ENCODE measurements at regions of chr10 and their contacts with region 1.

Region 1: DNA sequence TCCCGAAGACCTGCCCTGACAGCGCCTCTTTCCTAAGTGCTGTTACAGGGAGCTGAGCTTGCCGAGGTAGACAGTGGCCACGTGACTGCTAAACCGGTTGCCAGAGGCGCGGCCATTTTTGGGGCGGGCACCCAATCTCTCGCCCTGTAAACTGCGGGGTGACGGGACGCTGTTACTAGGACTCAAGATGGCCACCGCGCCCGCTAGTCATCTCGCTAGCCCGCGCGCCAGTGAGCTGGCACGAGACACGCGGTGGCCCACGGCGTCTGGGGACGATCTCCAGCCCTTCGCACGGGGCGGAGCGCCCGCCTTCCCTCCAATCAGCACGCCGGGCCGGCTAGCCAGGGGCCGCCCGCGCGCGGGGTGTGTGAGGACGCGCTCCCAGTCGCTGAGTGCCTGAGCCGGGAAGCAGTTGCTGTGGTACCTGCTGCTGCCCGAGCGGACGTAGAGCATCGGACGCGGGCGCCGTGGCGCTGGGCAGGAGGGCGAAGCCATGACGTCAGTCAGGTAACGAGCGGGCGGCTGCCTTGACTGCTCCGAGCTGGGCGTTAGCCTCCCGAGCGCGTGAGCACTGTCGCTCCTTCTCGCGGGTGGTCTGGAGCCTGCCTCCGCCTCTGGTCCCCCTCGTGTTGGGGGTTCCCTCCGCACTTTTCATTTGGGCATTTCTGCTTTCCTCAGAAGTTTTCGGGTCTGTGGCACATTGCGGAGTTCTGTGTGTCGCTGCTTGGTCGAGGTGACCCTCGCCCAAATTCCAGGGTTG is 25.5 kb downstream of the ADK start:
- DNase-seq: peak; percentile 96 to 97 (median 96)
- H3K4me3 ChIP-seq: peak overlapping the region; percentile 97
- H3K4me3 Mint-ChIP-seq: peak overlapping the region; percentile 91 to 94 (median 93)
- H3K27ac ChIP-seq: peak overlapping the region; percentile 94
- H3K27ac Mint-ChIP-seq: peak overlapping the region; percentile 93 to 98 (median 98)
- H3K4me1 ChIP-seq: peaks cover 33% of the 10 kb centered on the region
- H3K4me1 Mint-ChIP-seq: peaks cover 33 to 50% (median 48%) of the 10 kb centered on the region in 3 donors
- H3K27me3 ChIP-seq: no peaks in the 10 kb centered on the region
- H3K27me3 Mint-ChIP-seq: no peaks in the 10 kb centered on the region

Region 2: DNA sequence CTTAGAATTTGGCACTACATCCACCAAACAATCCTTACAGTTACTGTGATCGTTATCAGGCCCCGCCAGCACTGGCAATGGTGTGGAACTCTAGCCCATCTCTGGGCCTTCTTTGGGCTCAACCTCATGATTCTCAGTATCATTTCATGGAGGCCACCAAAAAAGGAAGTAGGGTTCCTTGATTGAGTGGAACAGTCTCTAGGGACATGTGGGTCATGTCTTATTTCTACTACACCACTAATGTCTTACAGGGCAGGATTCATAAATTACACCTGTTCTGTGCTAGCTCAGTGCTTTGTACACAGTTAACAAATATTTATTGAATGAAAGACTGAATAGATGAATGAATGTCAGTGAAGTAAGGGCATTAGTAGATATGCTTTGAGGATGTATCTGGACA is 79.8 kb before region 1 on chr10:
- CTCF ChIA-PET with region 1: no interaction called
- POLR2A ChIA-PET with region 1: no interaction called
- DNase-seq: no peak
- H3K4me3 ChIP-seq: no peak overlapping the region
- H3K4me3 Mint-ChIP-seq: no peak overlapping the region
- H3K27ac ChIP-seq: no peak overlapping the region
- H3K27ac Mint-ChIP-seq: peak overlapping the region in 3 of 8 donors; percentile 49 to 62 (median 54)
- H3K4me1 ChIP-seq: no peaks in the 10 kb centered on the region
- H3K4me1 Mint-ChIP-seq: no peaks in the 10 kb centered on the region
- H3K27me3 ChIP-seq: no peaks in the 10 kb centered on the region
- H3K27me3 Mint-ChIP-seq: no peaks in the 10 kb centered on the region

Region 3: DNA sequence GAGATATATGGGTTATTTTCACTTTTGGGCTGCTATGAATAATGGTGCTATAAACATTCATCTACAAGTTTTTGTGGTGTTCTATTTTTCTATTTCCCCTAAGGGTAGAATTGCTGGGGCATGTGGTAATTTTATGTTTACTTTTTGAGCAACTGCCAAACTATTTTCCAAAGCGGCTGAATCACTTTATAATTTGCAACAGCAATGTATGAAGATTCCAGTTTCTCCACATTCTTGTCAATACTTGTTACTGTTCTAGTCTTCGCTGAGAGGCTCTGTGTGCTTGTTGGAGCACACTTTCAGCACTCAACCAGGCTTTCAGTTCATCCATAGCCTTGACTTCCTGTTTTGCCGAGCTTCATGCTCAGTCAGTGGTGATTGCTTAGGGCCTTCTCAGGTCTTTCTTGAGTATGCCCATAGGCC is 13.4 kb after region 1 on chr10:
- CTCF ChIA-PET with region 1: interaction called, 8 read pairs
- POLR2A ChIA-PET with region 1: interaction called, 12 read pairs
- DNase-seq: peak in 2 of 5 donors; percentile 15 to 38
- H3K4me3 ChIP-seq: peak overlapping the region; percentile 20
- H3K4me3 Mint-ChIP-seq: peak overlapping the region in 6 of 7 donors; percentile 7 to 76 (median 66)
- H3K27ac ChIP-seq: no peak overlapping the region
- H3K27ac Mint-ChIP-seq: peak overlapping the region; percentile 31 to 95 (median 90)
- H3K4me1 ChIP-seq: peaks cover 37% of the 10 kb centered on the region
- H3K4me1 Mint-ChIP-seq: peaks cover 56 to 76% (median 73%) of the 10 kb centered on the region in 3 donors
- H3K27me3 ChIP-seq: no peaks in the 10 kb centered on the region
- H3K27me3 Mint-ChIP-seq: no peaks in the 10 kb centered on the region

Region 4: GRCh38 chr10:74282151-74282850 is 105.7 kb after region 1 on chr10:
- CTCF ChIA-PET with region 1: no interaction called
- POLR2A ChIA-PET with region 1: no interaction called
- DNase-seq: no peak
- H3K4me3 ChIP-seq: no peak overlapping the region
- H3K4me3 Mint-ChIP-seq: no peak overlapping the region
- H3K27ac ChIP-seq: no peak overlapping the region
- H3K27ac Mint-ChIP-seq: no peak overlapping the region
- H3K4me1 ChIP-seq: peaks cover 8% of the 10 kb centered on the region
- H3K4me1 Mint-ChIP-seq: peaks cover 10 to 13% (median 11%) of the 10 kb centered on the region in 3 donors
- H3K27me3 ChIP-seq: no peaks in the 10 kb centered on the region
- H3K27me3 Mint-ChIP-seq: no peaks in the 10 kb centered on the region